Naive thymus-derived CD4-positive, alpha-beta T cell (primary cell): ENCODE measurements at regions of chr7 and their contacts with region 1.

Region 1: DNA sequence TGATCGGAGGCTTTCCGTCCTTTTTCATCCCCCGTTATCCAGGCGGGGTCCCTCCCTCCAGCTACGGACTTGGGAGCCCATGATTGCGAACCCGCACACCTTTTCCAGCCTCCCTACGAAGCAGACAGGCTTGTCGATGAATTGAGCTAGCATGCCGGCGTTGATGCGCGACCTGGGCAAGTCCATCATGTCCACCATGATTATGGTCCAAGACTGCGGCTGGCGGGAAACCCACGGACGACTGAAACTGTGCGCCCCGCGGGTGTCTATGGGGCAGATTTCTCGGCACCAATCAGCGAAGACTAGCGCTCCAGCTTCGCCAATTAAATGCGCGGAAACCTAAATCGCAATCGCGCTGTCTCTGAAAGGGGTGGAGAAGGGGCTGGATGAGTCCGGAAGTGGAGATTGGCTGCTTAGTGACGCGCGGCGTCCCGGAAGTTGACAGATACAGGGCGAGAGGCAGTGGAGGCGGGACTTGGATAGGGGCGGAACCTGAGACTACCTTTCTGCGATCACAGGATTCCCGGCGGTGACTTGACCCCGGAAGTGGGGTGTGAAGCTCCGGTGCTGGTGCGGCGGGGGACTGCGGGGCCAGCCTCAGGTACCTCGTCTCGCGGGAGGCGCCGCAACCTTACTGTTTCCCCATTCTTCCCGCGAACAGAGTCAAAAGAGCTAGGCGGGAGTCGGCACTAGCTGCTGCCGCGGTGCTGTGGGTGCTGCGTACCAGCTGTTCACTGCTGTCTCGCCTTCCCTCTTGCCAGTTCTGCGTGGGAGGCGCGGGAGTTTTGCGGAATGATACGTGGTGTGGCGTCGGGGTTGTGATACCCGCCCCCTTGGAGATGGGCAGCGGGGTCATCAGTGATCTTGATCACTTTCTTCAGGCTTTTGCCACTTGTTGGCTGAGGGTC is at the start of gene UMAD1:
- DNase-seq: peak; percentile 86 to 100 (median 99)
- ATAC-seq: peak; percentile 97
- H3K4me3 ChIP-seq: peak within 1 kb of the TSS; percentile 79
- H3K4me3 Mint-ChIP-seq: peak within 1 kb of the TSS; percentile 90 to 98 (median 96)
- H3K27ac ChIP-seq: peak within 1 kb of the TSS; percentile 98
- H3K27ac Mint-ChIP-seq: peak within 1 kb of the TSS; percentile 97 to 99 (median 98)
- H3K4me1 ChIP-seq: peaks cover 14 to 19% of the 10 kb centered on the region in 2 donors
- H3K4me1 Mint-ChIP-seq: peaks cover 31 to 67% (median 55%) of the 10 kb centered on the region in 7 donors
- H3K27me3 ChIP-seq: no peaks in the 10 kb centered on the region
- H3K27me3 Mint-ChIP-seq: no peaks in the 10 kb centered on the region
- total RNA-seq, gene UMAD1: 11.4 to 28.5 (median 14.5) TPM

Region 2: DNA sequence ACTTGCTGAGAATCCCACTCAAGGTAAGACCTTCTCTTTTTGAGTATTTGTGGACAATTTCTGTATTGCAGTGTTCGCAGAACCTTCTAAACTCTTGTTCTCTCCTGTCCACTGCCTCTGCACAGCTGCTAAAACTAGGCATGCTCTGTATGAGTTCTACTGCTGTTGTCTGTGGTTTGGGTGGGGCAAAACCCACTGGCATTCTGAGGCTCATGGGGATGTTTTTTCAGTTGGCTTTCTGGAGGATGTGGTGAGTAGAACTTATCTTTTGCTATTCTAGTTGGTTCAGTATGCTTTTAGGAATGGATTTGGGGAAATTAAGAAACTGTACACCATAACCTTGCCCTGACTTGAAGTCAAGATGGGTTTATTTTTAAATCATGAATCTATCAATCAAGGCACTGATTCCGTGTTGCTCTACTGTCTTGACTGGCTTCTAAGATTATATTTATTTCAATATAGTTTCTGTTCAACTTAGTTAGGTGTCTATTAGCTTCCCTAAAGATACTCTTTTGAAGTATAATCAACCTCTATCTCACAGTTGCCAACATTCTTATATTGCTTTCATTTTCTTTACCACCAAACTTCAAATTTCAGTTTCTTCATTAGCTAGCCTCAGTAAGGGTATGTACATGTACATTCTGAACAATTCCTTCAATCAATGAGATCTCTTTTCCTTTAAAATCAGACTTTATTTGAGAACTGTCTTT is 483.1 kb before region 1 on chr7:
- CTCF ChIA-PET with region 1: no interaction called
- POLR2A ChIA-PET with region 1: interaction called, 3 read pairs
- intact Hi-C with region 1: loop called in 1 of 2 experiments (anchors 1 kb)
- DNase-seq: peak; percentile 16 to 89 (median 83)
- ATAC-seq: peak; percentile 97
- H3K4me3 ChIP-seq: peak overlapping the region; percentile 51
- H3K4me3 Mint-ChIP-seq: peak overlapping the region; percentile 51 to 90 (median 79)
- H3K27ac ChIP-seq: peak overlapping the region; percentile 67
- H3K27ac Mint-ChIP-seq: peak overlapping the region; percentile 81 to 99 (median 92)
- H3K4me1 ChIP-seq: peaks cover 34 to 46% of the 10 kb centered on the region in 2 donors
- H3K4me1 Mint-ChIP-seq: peaks cover 40 to 82% (median 73%) of the 10 kb centered on the region in 7 donors
- H3K27me3 ChIP-seq: no peaks in the 10 kb centered on the region
- H3K27me3 Mint-ChIP-seq: no peaks in the 10 kb centered on the region

Region 3: DNA sequence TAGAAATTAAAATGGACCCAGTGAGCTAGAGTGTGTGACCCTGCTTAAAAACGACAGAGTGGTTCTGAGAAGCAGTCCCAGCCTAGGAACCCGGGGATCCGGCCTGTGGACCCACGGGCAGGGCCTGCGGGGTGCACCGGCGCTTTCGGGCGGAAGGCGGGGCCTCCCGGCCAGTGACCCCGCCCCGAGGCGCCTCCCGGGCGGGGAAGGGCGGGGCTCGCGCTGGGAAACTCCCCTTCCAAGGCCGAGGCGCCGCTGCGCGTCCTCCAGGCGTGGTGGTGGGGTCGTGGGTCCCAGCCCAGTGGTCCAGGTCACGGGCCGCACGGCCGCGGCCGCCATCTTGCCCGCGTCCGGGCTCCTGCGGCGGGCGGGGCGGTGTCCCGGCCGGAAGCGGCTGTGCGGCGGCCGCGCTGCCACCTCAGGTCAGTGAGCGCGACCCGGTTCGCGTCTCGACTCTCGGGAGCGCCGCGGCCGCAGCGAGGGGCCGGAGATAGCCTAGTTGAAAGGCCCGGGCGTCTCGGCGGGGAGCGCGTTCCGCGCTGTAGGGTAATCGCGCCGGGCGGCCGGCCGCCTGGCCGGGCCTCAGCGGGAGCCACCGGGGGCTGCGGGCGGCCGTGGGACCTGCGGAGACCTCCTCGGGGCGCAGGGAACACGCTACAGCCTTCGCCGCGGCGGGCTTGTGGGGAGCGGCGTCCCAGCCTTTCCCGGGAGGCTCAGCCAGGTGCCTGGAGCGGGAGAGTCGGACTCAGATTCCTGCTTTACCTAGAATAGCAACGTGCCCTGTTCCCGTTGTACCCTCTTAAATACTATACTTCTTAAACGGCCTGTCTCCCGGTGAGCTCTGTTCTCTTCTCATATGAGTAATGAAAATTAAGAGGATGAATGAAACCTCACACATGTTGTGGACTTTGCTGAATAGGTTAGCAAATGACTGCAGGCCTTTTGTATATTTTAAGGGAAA is 73.5 kb before region 1 on chr7 and contains the start of gene MIOS:
- CTCF ChIA-PET with region 1: no interaction called
- POLR2A ChIA-PET with region 1: interaction called, 8 read pairs
- intact Hi-C with region 1: loop called (anchors 1 kb)
- DNase-seq: peak; percentile 73 to 88 (median 83)
- ATAC-seq: peak; percentile 95
- H3K4me3 ChIP-seq: peak within 1 kb of the TSS; percentile 77
- H3K4me3 Mint-ChIP-seq: peak within 1 kb of the TSS in 9 of 10 donors; percentile 75 to 92 (median 86)
- H3K27ac ChIP-seq: peak within 1 kb of the TSS; percentile 98
- H3K27ac Mint-ChIP-seq: peak within 1 kb of the TSS; percentile 80 to 91 (median 85)
- H3K4me1 ChIP-seq: peaks cover 27 to 29% of the 10 kb centered on the region in 2 donors
- H3K4me1 Mint-ChIP-seq: peaks cover 21 to 41% (median 37%) of the 10 kb centered on the region in 7 donors
- H3K27me3 ChIP-seq: no peaks in the 10 kb centered on the region
- H3K27me3 Mint-ChIP-seq: no peaks in the 10 kb centered on the region
- total RNA-seq, gene MIOS: 24.3 to 31.7 (median 28.7) TPM

Region 4: GRCh38 chr7:7681179-7681935 is 40.9 kb after region 1 on chr7:
- CTCF ChIA-PET with region 1: interaction called, 3 read pairs
- POLR2A ChIA-PET with region 1: interaction called, 10 read pairs
- intact Hi-C with region 1: loop called in 1 of 2 experiments (anchors 2 kb)
- DNase-seq: peak in 7 of 9 donors; percentile 37 to 66 (median 58)
- ATAC-seq: peak; percentile 84
- H3K4me3 ChIP-seq: no peak overlapping the region
- H3K4me3 Mint-ChIP-seq: peak overlapping the region in 5 of 10 donors; percentile 8 to 56 (median 25)
- H3K27ac ChIP-seq: no peak overlapping the region
- H3K27ac Mint-ChIP-seq: peak overlapping the region; percentile 1 to 76 (median 18)
- H3K4me1 ChIP-seq: peaks cover 0 to 15% of the 10 kb centered on the region in 2 donors
- H3K4me1 Mint-ChIP-seq: peaks cover 11 to 48% (median 37%) of the 10 kb centered on the region in 7 donors
- H3K27me3 ChIP-seq: no peaks in the 10 kb centered on the region
- H3K27me3 Mint-ChIP-seq: no peaks in the 10 kb centered on the region

Region 5: DNA sequence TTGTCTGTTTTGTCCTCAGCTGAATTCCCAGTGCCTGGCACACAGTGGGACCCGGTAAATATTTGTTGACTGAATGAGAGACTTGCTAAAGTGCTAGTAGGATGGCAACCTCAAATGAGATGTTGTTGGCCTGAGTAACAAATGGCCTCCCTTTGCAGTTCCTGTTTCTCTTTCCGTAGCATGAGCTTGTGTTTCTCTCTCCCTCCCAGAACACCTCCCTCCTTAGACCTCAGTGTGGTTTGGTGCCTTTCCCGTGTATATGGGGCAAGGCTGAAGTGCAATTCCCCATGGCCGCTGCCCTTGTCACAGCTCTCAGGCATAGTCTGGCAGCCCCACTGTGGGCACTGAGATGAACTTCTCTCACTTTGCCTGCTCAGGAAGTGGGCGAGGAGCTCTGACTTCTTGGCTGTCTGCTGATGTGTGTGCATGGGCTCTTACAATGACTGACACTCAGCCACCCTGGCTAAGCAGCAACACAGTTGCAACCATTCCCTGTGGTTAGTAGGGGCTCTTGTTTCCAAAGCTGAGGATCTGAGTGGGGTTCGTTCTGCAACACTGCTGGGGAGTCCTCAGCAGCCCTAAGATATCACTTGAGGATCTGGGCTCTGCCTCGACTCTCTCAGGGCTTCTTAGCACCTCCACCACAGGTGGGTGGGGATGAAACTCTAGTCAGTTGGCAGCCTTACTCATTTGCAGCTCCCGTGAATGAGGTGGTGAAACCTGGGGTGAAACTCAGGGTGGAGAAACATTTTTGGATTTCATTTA is 485.4 kb after region 1 on chr7:
- CTCF ChIA-PET with region 1: no interaction called
- POLR2A ChIA-PET with region 1: interaction called, 3 read pairs
- intact Hi-C with region 1: loop called in 1 of 2 experiments (anchors 1 kb)
- DNase-seq: peak; percentile 47 to 83 (median 77)
- ATAC-seq: peak; percentile 95
- H3K4me3 ChIP-seq: peak overlapping the region; percentile 9
- H3K4me3 Mint-ChIP-seq: peak overlapping the region; percentile 59 to 83 (median 75)
- H3K27ac ChIP-seq: peak overlapping the region; percentile 70
- H3K27ac Mint-ChIP-seq: peak overlapping the region; percentile 92 to 100 (median 99)
- H3K4me1 ChIP-seq: peaks cover 56 to 69% of the 10 kb centered on the region in 2 donors
- H3K4me1 Mint-ChIP-seq: peaks cover 56 to 88% (median 77%) of the 10 kb centered on the region in 7 donors
- H3K27me3 ChIP-seq: no peaks in the 10 kb centered on the region
- H3K27me3 Mint-ChIP-seq: no peaks in the 10 kb centered on the region